ENCODE measurements at regions of chr2 and their contacts with region 1.

Region 1: GRCh38 chr2:147045113-147045512 is 799.7 kb upstream of the ACVR2A start:
- DNase-seq: peak; percentile 45
- ATAC-seq: peak; percentile 92
- H3K4me3 ChIP-seq: no peak overlapping the region
- H3K27ac ChIP-seq: no peak overlapping the region
- H3K4me1 ChIP-seq: peaks cover 4% of the 10 kb centered on the region; the same call in 1 of the 2 replicates
- H3K27me3 ChIP-seq: no peaks in the 10 kb centered on the region
- CTCF ChIP-seq: peak; percentile 70
- EP300 ChIP-seq: no peak
- POLR2A ChIP-seq: no peak
- RAD21 ChIP-seq: peak; percentile 48; the same call in 1 of the 2 replicates

Region 2: GRCh38 chr2:147017951-147018642 is 27.0 kb before region 1 on chr2:
- CTCF ChIA-PET with region 1: no interaction called
- POLR2A ChIA-PET with region 1: no interaction called
- in situ Hi-C with region 1: no loop called
- intact Hi-C with region 1: no loop called
- DNase-seq: no peak
- ATAC-seq: no peak
- H3K4me3 ChIP-seq: no peak overlapping the region
- H3K27ac ChIP-seq: no peak overlapping the region
- H3K4me1 ChIP-seq: no peaks in the 10 kb centered on the region
- H3K27me3 ChIP-seq: no peaks in the 10 kb centered on the region
- CTCF ChIP-seq: no peak
- EP300 ChIP-seq: no peak
- POLR2A ChIP-seq: no peak
- RAD21 ChIP-seq: no peak

Region 3: DNA sequence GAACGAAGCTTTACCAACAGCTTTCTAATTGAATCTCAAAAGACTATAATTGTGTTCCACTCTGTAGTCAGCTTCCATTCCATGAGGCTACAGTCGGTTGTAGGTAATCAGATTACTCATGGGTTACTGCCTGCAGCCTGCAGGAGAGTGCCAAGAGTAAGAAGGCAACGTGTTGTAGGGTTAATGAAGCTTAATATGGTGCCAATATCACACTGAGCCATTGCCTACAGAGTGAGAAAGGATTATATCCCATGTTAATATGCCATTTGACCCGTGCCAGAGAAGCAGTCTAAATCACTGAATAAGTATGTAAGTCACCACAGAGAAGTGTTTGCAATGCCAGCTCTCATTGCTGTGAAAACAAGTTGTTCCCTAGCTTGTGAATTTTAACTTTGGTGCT is 65.2 kb after region 1 on chr2:
- CTCF ChIA-PET with region 1: no interaction called
- POLR2A ChIA-PET with region 1: no interaction called
- in situ Hi-C with region 1: no loop called
- intact Hi-C with region 1: no loop called
- DNase-seq: no peak
- ATAC-seq: no peak
- H3K4me3 ChIP-seq: no peak overlapping the region
- H3K27ac ChIP-seq: no peak overlapping the region
- H3K4me1 ChIP-seq: no peaks in the 10 kb centered on the region
- H3K27me3 ChIP-seq: no peaks in the 10 kb centered on the region
- CTCF ChIP-seq: no peak
- EP300 ChIP-seq: no peak
- POLR2A ChIP-seq: no peak
- RAD21 ChIP-seq: no peak

Region 4: GRCh38 chr2:147331790-147332419 is 286.8 kb after region 1 on chr2:
- CTCF ChIA-PET with region 1: interaction called, 3 read pairs
- POLR2A ChIA-PET with region 1: no interaction called
- in situ Hi-C with region 1: no loop called
- intact Hi-C with region 1: loop called (anchors 2 kb)
- DNase-seq: peak; percentile 5
- ATAC-seq: peak; percentile 40; the same call in 1 of the 3 replicates
- H3K4me3 ChIP-seq: no peak overlapping the region
- H3K27ac ChIP-seq: no peak overlapping the region
- H3K4me1 ChIP-seq: no peaks in the 10 kb centered on the region
- H3K27me3 ChIP-seq: no peaks in the 10 kb centered on the region
- CTCF ChIP-seq: 0 out of 2 replicates have a peak, but pooled peaks have one; percentile 24
- EP300 ChIP-seq: no peak
- POLR2A ChIP-seq: no peak
- RAD21 ChIP-seq: no peak

Region 5: DNA sequence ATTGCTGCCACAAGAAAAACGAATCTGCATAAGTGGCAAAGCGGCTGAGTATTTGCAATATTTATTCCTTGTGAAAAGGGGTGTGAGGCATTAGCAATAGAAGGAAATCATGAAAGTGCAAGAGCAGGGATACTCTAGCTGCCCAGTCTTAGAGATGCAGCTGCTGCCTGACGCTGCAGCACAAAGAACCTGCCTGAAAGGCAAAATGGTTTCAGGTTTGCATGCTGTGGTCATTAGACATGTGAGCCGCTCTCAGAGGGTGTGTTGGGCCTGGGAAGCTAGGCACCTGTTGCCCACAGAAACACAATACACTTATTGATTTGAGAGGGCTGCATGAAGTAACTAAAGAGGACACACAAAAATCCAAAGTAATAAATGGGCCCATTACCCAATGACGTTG is 307.2 kb after region 1 on chr2:
- CTCF ChIA-PET with region 1: no interaction called
- POLR2A ChIA-PET with region 1: no interaction called
- in situ Hi-C with region 1: no loop called
- intact Hi-C with region 1: no loop called
- DNase-seq: no peak
- ATAC-seq: no peak
- H3K4me3 ChIP-seq: no peak overlapping the region
- H3K27ac ChIP-seq: no peak overlapping the region
- H3K4me1 ChIP-seq: no peaks in the 10 kb centered on the region
- H3K27me3 ChIP-seq: no peaks in the 10 kb centered on the region
- CTCF ChIP-seq: no peak
- EP300 ChIP-seq: no peak
- POLR2A ChIP-seq: no peak
- RAD21 ChIP-seq: no peak

Region 6: GRCh38 chr2:147449323-147449991 is 404.3 kb after region 1 on chr2:
- CTCF ChIA-PET with region 1: no interaction called
- POLR2A ChIA-PET with region 1: no interaction called
- in situ Hi-C with region 1: no loop called
- intact Hi-C with region 1: no loop called
- DNase-seq: no peak
- ATAC-seq: peak; percentile 69
- H3K4me3 ChIP-seq: no peak overlapping the region
- H3K27ac ChIP-seq: no peak overlapping the region
- H3K4me1 ChIP-seq: no peaks in the 10 kb centered on the region
- H3K27me3 ChIP-seq: no peaks in the 10 kb centered on the region
- CTCF ChIP-seq: no peak
- EP300 ChIP-seq: no peak
- POLR2A ChIP-seq: no peak
- RAD21 ChIP-seq: no peak

Measured in HepG2 (cell line).